Naive thymus-derived CD4-positive, alpha-beta T cell (primary cell): ENCODE measurements at regions of chr1 and their contacts with region 1.

Region 1: GRCh38 chr1:181142096-181142958 is 53.8 kb downstream of the IER5 start:
- DNase-seq: peak; percentile 70 to 91 (median 83)
- ATAC-seq: peak; percentile 96
- H3K4me3 ChIP-seq: no peak overlapping the region
- H3K4me3 Mint-ChIP-seq: peak overlapping the region in 4 of 10 donors; percentile 2 to 63 (median 18)
- H3K27ac ChIP-seq: no peak overlapping the region
- H3K27ac Mint-ChIP-seq: peak overlapping the region in 4 of 9 donors; percentile 28 to 81 (median 54)
- H3K4me1 ChIP-seq: peaks cover 7 to 15% of the 10 kb centered on the region in 2 donors
- H3K4me1 Mint-ChIP-seq: peaks cover 18 to 62% (median 34%) of the 10 kb centered on the region in 7 donors
- H3K27me3 ChIP-seq: no peaks in the 10 kb centered on the region
- H3K27me3 Mint-ChIP-seq: peaks cover 0 to 24% (median 0%) of the 10 kb centered on the region in 5 donors

Region 2: GRCh38 chr1:180515864-180516388 is 626.4 kb before region 1 on chr1:
- CTCF ChIA-PET with region 1: interaction called, 3 read pairs
- POLR2A ChIA-PET with region 1: no interaction called
- intact Hi-C with region 1: loop called in 1 of 2 experiments (anchors 1 kb)
- DNase-seq: peak in 8 of 9 donors; percentile 33 to 65 (median 53)
- ATAC-seq: peak; percentile 94
- H3K4me3 ChIP-seq: no peak overlapping the region
- H3K4me3 Mint-ChIP-seq: no peak overlapping the region
- H3K27ac ChIP-seq: no peak overlapping the region
- H3K27ac Mint-ChIP-seq: no peak overlapping the region
- H3K4me1 ChIP-seq: no peaks in the 10 kb centered on the region
- H3K4me1 Mint-ChIP-seq: peaks cover 0 to 3% (median 0%) of the 10 kb centered on the region in 7 donors
- H3K27me3 ChIP-seq: no peaks in the 10 kb centered on the region
- H3K27me3 Mint-ChIP-seq: peaks cover 0 to 13% (median 10%) of the 10 kb centered on the region in 5 donors

Region 3: GRCh38 chr1:180881806-180882509 is 260.4 kb before region 1 on chr1:
- CTCF ChIA-PET with region 1: interaction called, 10 read pairs
- POLR2A ChIA-PET with region 1: no interaction called
- intact Hi-C with region 1: loop called (anchors 1 kb)
- DNase-seq: peak in 3 of 9 donors; percentile 5 to 19 (median 10)
- ATAC-seq: no peak
- H3K4me3 ChIP-seq: no peak overlapping the region
- H3K4me3 Mint-ChIP-seq: no peak overlapping the region
- H3K27ac ChIP-seq: no peak overlapping the region
- H3K27ac Mint-ChIP-seq: peak overlapping the region in 1 of 9 donors; percentile 15
- H3K4me1 ChIP-seq: no peaks in the 10 kb centered on the region
- H3K4me1 Mint-ChIP-seq: peaks cover 0 to 5% (median 0%) of the 10 kb centered on the region in 7 donors
- H3K27me3 ChIP-seq: no peaks in the 10 kb centered on the region
- H3K27me3 Mint-ChIP-seq: no peaks in the 10 kb centered on the region

Region 4: DNA sequence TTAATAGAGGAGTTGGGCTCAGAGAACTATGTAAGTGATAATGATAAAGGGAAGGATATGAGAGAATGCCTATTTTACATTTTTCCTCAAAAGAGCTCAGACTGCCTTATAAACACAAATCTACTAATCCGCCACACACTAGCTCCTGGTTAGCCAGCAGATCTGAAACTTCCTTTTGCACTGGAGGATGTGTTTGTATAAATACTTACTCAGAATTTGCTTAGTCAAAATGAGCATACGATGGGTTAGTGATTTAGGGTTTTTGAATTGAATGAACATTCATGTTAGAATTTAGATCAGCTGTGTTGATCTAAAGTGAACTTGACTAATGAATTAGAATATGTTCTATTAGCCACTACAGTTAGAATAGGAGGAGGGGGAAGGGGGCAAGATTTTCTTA is 62.9 kb before region 1 on chr1:
- CTCF ChIA-PET with region 1: interaction called, 98 read pairs
- POLR2A ChIA-PET with region 1: interaction called, 176 read pairs
- intact Hi-C with region 1: loop called (anchors 1 kb)
- DNase-seq: no peak
- ATAC-seq: no peak
- H3K4me3 ChIP-seq: no peak overlapping the region
- H3K4me3 Mint-ChIP-seq: no peak overlapping the region
- H3K27ac ChIP-seq: no peak overlapping the region
- H3K27ac Mint-ChIP-seq: no peak overlapping the region
- H3K4me1 ChIP-seq: no peaks in the 10 kb centered on the region
- H3K4me1 Mint-ChIP-seq: peaks cover 0 to 22% (median 2%) of the 10 kb centered on the region in 7 donors
- H3K27me3 ChIP-seq: no peaks in the 10 kb centered on the region
- H3K27me3 Mint-ChIP-seq: peaks cover 9 to 35% (median 12%) of the 10 kb centered on the region in 5 donors

Region 5: GRCh38 chr1:181159451-181160140 is 17.3 kb after region 1 on chr1:
- CTCF ChIA-PET with region 1: interaction called, 53 read pairs
- POLR2A ChIA-PET with region 1: interaction called, 84 read pairs
- intact Hi-C with region 1: no loop called
- DNase-seq: peak; percentile 20 to 74 (median 68)
- ATAC-seq: peak; percentile 75
- H3K4me3 ChIP-seq: peak overlapping the region; percentile 28
- H3K4me3 Mint-ChIP-seq: peak overlapping the region; percentile 48 to 83 (median 72)
- H3K27ac ChIP-seq: no peak overlapping the region
- H3K27ac Mint-ChIP-seq: peak overlapping the region; percentile 80 to 98 (median 91)
- H3K4me1 ChIP-seq: peaks cover 25 to 37% of the 10 kb centered on the region in 2 donors
- H3K4me1 Mint-ChIP-seq: peaks cover 25 to 59% (median 45%) of the 10 kb centered on the region in 7 donors
- H3K27me3 ChIP-seq: no peaks in the 10 kb centered on the region
- H3K27me3 Mint-ChIP-seq: peaks cover 0 to 50% (median 0%) of the 10 kb centered on the region in 5 donors

Region 6: DNA sequence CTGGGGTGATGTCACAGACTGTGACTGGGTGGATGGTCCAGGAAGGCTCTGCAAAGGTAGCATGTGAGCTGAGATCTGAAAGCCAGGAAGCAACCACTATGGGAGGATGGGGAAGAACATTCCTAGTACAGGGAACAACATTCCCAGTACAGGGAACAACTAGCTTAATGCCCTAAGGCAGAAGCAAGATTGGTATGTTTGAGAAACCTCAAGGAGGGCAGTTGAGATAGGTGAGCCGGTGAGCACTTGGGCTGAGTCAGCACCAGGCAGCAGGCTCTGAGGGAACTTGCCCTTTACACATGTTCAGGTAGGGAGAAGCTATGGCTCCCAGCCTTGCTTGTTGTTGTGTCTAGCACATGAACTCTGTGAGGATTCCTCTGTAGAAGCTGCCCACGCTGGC is 316.7 kb after region 1 on chr1:
- CTCF ChIA-PET with region 1: no interaction called
- POLR2A ChIA-PET with region 1: no interaction called
- intact Hi-C with region 1: no loop called
- DNase-seq: no peak
- ATAC-seq: no peak
- H3K4me3 ChIP-seq: no peak overlapping the region
- H3K4me3 Mint-ChIP-seq: no peak overlapping the region
- H3K27ac ChIP-seq: no peak overlapping the region
- H3K27ac Mint-ChIP-seq: no peak overlapping the region
- H3K4me1 ChIP-seq: no peaks in the 10 kb centered on the region
- H3K4me1 Mint-ChIP-seq: no peaks in the 10 kb centered on the region
- H3K27me3 ChIP-seq: no peaks in the 10 kb centered on the region
- H3K27me3 Mint-ChIP-seq: peaks cover 8 to 22% (median 15%) of the 10 kb centered on the region in 5 donors

Region 7: GRCh38 chr1:183023601-183024316 is 1881.4 kb after region 1 on chr1:
- CTCF ChIA-PET with region 1: no interaction called
- POLR2A ChIA-PET with region 1: no interaction called
- intact Hi-C with region 1: no loop called
- DNase-seq: peak in 7 of 9 donors; percentile 5 to 43 (median 12)
- ATAC-seq: peak; percentile 65
- H3K4me3 ChIP-seq: peak overlapping the region; percentile 12
- H3K4me3 Mint-ChIP-seq: peak overlapping the region; percentile 67 to 89 (median 82)
- H3K27ac ChIP-seq: no peak overlapping the region
- H3K27ac Mint-ChIP-seq: peak overlapping the region in 1 of 9 donors; percentile 5
- H3K4me1 ChIP-seq: peaks cover 6 to 18% of the 10 kb centered on the region in 2 donors
- H3K4me1 Mint-ChIP-seq: peaks cover 12 to 21% (median 18%) of the 10 kb centered on the region in 7 donors
- H3K27me3 ChIP-seq: peaks cover 4 to 36% of the 10 kb centered on the region in 2 donors
- H3K27me3 Mint-ChIP-seq: peaks cover 69 to 82% (median 76%) of the 10 kb centered on the region in 5 donors